ENCODE measurements at regions of chr6 and their contacts with region 1.

Region 1: GRCh38 chr6:108835218-108835850 is 12.9 kb upstream of the ARMC2 start:
- DNase-seq: peak; percentile 85 to 91 (median 88)
- ATAC-seq: peak; percentile 78 to 96 (median 94)
- H3K4me3 ChIP-seq: no peak overlapping the region
- H3K27ac ChIP-seq: peak overlapping the region in 4 of 12 donors; percentile 3 to 34 (median 14)
- H3K4me1 ChIP-seq: peaks cover 0 to 39% (median 1%) of the 10 kb centered on the region in 12 donors
- H3K27me3 ChIP-seq: no peaks in the 10 kb centered on the region
- CTCF ChIP-seq: peak in 11 of 12 donors; percentile 85 to 98 (median 95)
- POLR2A ChIP-seq: no peak

Region 2: DNA sequence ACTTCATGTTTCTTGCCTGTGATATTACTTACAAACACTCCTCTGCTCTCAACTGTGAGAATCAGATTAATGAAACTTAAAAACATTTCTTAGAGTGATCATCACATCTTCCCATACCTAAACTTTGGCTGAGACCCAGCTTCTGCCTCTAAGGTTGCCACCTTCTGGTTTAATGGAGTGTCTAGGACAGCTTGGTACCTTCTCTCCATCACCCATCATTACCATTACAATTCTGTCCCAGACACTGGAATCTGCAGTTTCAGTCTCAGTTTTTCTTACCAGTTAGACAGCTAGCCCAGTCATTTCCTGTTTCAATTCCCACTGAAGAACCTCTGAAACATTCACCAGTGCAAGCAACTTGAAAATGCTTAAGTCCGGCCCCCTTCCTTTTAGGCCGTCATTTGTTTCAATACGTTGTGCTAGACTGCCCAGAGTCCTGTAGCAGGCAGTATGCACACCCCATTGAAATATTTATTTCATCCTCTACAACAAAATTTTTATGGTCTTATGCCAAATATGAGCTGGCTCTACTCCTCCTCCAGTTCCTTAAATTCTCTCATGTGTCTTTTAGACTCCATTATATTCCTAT is 381.6 kb before region 1 on chr6:
- intact Hi-C with region 1: no loop called
- DNase-seq: peak in 1 of 5 donors; percentile 16
- ATAC-seq: peak in 3 of 4 donors; percentile 55 to 72 (median 60)
- H3K4me3 ChIP-seq: no peak overlapping the region
- H3K27ac ChIP-seq: peak overlapping the region in 8 of 12 donors; percentile 14 to 80 (median 40)
- H3K4me1 ChIP-seq: peaks cover 0 to 25% (median 16%) of the 10 kb centered on the region in 12 donors
- H3K27me3 ChIP-seq: no peaks in the 10 kb centered on the region
- CTCF ChIP-seq: no peak
- POLR2A ChIP-seq: no peak

Region 3: DNA sequence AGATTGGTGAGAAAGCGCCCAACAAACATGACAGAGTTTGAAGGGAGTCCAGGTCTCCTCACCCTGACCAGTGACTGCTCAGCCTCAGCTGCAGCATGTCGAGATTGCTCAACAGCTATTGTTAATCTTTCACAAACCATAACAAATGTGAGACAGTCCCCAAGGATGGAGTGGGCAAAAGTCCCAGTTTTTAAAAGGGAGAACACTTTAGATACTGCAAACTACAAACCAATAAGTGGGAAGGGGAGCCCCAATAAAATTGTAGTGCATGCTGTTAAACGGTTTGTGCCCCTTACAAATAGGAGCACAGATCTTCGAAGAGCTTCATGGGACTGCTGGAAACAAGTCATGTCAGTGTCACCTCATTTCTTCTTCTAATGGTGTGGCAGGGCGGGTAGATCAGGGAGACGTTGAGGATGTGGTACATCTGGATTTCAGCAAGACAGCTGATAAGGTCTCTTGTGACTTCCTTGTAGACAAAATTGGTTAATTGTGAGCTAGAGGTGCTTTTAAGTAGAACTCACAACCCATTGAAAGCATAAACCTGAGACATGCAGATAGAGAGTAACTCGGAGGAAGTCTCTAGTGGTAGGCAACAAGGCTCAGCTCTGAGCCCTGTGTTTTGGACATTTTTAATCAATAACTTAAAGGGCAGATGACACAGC is 121.1 kb before region 1 on chr6:
- intact Hi-C with region 1: loop called in 1 of 10 experiments (anchors 10 kb)
- DNase-seq: peak in 2 of 5 donors; percentile 39 to 55
- ATAC-seq: peak; percentile 48 to 78 (median 58)
- H3K4me3 ChIP-seq: peak overlapping the region in 1 of 12 donors; percentile 15
- H3K27ac ChIP-seq: peak overlapping the region in 3 of 12 donors; percentile 4 to 14 (median 11)
- H3K4me1 ChIP-seq: peaks cover 0 to 40% (median 16%) of the 10 kb centered on the region in 12 donors
- H3K27me3 ChIP-seq: no peaks in the 10 kb centered on the region
- CTCF ChIP-seq: no peak
- POLR2A ChIP-seq: no peak

Region 4: GRCh38 chr6:108798670-108799353 is 36.5 kb before region 1 on chr6:
- intact Hi-C with region 1: loop called in 1 of 10 experiments (anchors 5 kb)
- DNase-seq: peak in 4 of 5 donors; percentile 37 to 71 (median 50)
- ATAC-seq: peak; percentile 40 to 76 (median 72)
- H3K4me3 ChIP-seq: no peak overlapping the region
- H3K27ac ChIP-seq: peak overlapping the region in 1 of 12 donors; percentile 54
- H3K4me1 ChIP-seq: peaks cover 0 to 47% (median 12%) of the 10 kb centered on the region in 12 donors
- H3K27me3 ChIP-seq: no peaks in the 10 kb centered on the region
- CTCF ChIP-seq: no peak
- POLR2A ChIP-seq: no peak

Region 5: GRCh38 chr6:108868647-108869046 is 33.3 kb after region 1 on chr6:
- intact Hi-C with region 1: no loop called
- DNase-seq: peak in 4 of 5 donors; percentile 51 to 70 (median 64)
- ATAC-seq: peak; percentile 56 to 84 (median 70)
- H3K4me3 ChIP-seq: no peak overlapping the region
- H3K27ac ChIP-seq: peak overlapping the region in 11 of 12 donors; percentile 8 to 73 (median 41)
- H3K4me1 ChIP-seq: peaks cover 0 to 39% (median 12%) of the 10 kb centered on the region in 12 donors
- H3K27me3 ChIP-seq: no peaks in the 10 kb centered on the region
- CTCF ChIP-seq: peak in 2 of 12 donors; percentile 9 to 23
- POLR2A ChIP-seq: no peak

Region 6: GRCh38 chr6:108883172-108883571 is 47.8 kb after region 1 on chr6:
- intact Hi-C with region 1: loop called in 3 of 10 experiments (anchors 5 to 10 kb)
- DNase-seq: no peak
- ATAC-seq: no peak
- H3K4me3 ChIP-seq: no peak overlapping the region
- H3K27ac ChIP-seq: peak overlapping the region in 1 of 12 donors; percentile 42
- H3K4me1 ChIP-seq: peaks cover 0 to 21% (median 7%) of the 10 kb centered on the region in 12 donors
- H3K27me3 ChIP-seq: no peaks in the 10 kb centered on the region
- CTCF ChIP-seq: no peak
- POLR2A ChIP-seq: no peak

Measured in heart left ventricle (tissue), 16 donors.